GM10248 (cell line): ENCODE measurements at regions of chr5 and their contacts with region 1.

Region 1: DNA sequence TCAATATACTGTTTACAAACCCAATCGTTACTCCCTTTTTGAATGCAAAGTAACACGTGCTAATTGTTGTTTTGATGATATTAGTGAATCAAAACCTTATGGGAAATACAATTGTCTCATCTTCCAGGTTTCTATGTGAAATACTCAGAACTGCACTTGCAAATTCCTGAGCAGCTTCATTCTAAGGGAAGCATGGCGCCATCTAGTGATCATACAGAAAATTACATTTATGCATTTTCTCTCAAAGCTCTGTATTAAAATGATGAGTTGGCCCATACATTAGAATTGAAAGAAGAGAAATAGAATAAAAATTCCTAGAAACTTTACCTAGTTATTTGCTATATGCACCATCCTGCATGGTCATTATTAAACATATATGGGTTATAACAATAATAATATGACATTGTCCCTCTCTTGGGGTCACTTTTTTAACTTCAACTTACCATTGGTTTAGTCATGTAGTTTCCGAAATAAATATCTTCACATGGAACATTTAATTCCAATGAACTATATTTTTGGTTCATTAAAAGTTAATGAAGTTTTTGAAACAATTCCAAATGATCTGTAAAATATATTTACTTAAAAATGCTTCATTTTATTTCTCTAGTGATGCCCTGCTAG is 220.0 kb downstream of the PDE4D start:
- DNase-seq: peak; percentile 22
- CTCF ChIP-seq: peak; percentile 62

Region 2: GRCh38 chr5:59390074-59390659 is 283.4 kb before region 1 on chr5:
- CTCF ChIA-PET with region 1: interaction called, 26 read pairs
- POLR2A ChIA-PET with region 1: no interaction called
- DNase-seq: no peak
- CTCF ChIP-seq: peak; percentile 46

Region 3: GRCh38 chr5:59660737-59661136 is 12.8 kb before region 1 on chr5:
- CTCF ChIA-PET with region 1: interaction called, 64 read pairs
- POLR2A ChIA-PET with region 1: no interaction called
- DNase-seq: peak; percentile 20
- CTCF ChIP-seq: peak; percentile 50

Region 4: GRCh38 chr5:59685793-59686192 is 12.2 kb after region 1 on chr5:
- CTCF ChIA-PET with region 1: interaction called, 33 read pairs
- POLR2A ChIA-PET with region 1: no interaction called
- DNase-seq: no peak
- CTCF ChIP-seq: peak; percentile 2

Region 5: GRCh38 chr5:59716029-59716428 is 42.5 kb after region 1 on chr5:
- CTCF ChIA-PET with region 1: no interaction called
- POLR2A ChIA-PET with region 1: no interaction called
- DNase-seq: no peak
- CTCF ChIP-seq: no peak